ENCODE measurements at regions of chr17 and their contacts with region 1.

Region 1: GRCh38 chr17:63998050-63998720 is at the start of gene PRR29:
- DNase-seq: peak; percentile 71
- H3K4me3 Mint-ChIP-seq: peak within 1 kb of the TSS; percentile 85
- H3K27ac Mint-ChIP-seq: peak within 1 kb of the TSS; percentile 52
- H3K4me1 Mint-ChIP-seq: peaks cover 43% of the 10 kb centered on the region
- H3K27me3 Mint-ChIP-seq: peaks cover 17% of the 10 kb centered on the region
- total RNA-seq, gene PRR29: 0.44 and 0.91 TPM in 2 replicates

Region 2: GRCh38 chr17:63974594-63975192 is 23.5 kb before region 1 on chr17:
- intact Hi-C with region 1: no loop called
- DNase-seq: no peak
- H3K4me3 Mint-ChIP-seq: no peak overlapping the region
- H3K27ac Mint-ChIP-seq: no peak overlapping the region
- H3K4me1 Mint-ChIP-seq: no peaks in the 10 kb centered on the region
- H3K27me3 Mint-ChIP-seq: peaks cover 9% of the 10 kb centered on the region

Region 3: GRCh38 chr17:64020056-64020766 is 22.0 kb after region 1 on chr17 and contains the start of gene ICAM2:
- intact Hi-C with region 1: loop called (anchors 1 kb)
- DNase-seq: peak; percentile 84
- H3K4me3 Mint-ChIP-seq: peak within 1 kb of the TSS; percentile 97
- H3K27ac Mint-ChIP-seq: peak within 1 kb of the TSS; percentile 100
- H3K4me1 Mint-ChIP-seq: peaks cover 91% of the 10 kb centered on the region
- H3K27me3 Mint-ChIP-seq: no peaks in the 10 kb centered on the region
- total RNA-seq, gene ICAM2: 58.3 and 62.1 TPM in 2 replicates

Region 4: DNA sequence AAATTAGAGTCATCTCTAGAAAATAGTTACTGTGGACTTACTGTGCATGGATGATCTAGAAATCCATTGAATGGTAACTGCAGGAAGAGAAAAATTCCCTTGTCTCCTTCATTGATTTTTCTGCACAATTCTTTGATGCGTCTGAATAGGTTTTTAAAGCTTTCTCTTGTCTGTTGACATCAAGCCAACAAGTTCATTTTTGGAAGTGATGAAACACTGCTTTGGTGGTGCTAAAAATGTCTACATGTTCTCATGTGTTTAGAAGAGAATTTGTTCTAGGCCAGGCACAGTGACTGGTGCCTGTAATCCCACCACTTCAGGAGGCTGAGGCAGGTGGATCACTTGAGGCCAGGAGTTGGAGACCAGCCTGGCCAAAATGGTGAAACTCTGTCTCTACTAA is 1620.3 kb after region 1 on chr17:
- intact Hi-C with region 1: no loop called
- DNase-seq: no peak
- H3K4me3 Mint-ChIP-seq: no peak overlapping the region
- H3K27ac Mint-ChIP-seq: no peak overlapping the region
- H3K4me1 Mint-ChIP-seq: no peaks in the 10 kb centered on the region
- H3K27me3 Mint-ChIP-seq: peaks cover 3% of the 10 kb centered on the region